ENCODE measurements at regions of chr6 and their contacts with region 1.

Region 1: DNA sequence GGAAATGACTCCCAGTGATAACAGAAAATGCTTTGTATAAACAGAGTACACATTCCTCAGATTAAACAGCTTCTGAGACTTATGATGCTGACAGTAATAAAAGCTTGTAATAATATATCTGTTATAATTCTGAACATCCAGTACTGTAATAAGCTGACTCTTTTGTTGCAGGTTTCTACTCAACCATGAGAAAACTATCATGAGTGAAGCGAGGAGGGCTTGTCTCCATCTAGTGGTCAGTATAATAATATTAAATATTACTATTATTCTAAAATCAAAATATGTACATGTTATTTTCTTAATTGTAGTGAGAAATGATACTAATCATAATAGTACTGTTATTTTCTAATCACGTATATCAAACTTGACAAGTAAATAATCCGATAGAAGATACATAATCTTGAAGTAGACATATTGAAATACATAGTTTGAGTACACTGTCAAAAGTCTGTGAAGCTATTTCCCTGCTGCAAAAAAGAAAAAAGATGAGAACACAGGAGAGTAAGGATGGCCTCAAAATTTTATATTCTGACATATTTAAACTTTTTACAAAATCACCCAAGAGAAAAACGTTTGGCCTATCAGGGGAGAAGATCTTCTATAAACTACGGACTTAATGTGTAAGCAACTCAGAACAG is 183.1 kb downstream of the MOXD1 start:
- DNase-seq: no peak
- ATAC-seq: no peak
- H3K4me3 ChIP-seq: no peak overlapping the region
- H3K27ac ChIP-seq: no peak overlapping the region
- H3K4me1 ChIP-seq: no peaks in the 10 kb centered on the region
- H3K27me3 ChIP-seq: no peaks in the 10 kb centered on the region
- CTCF ChIP-seq: peak; percentile 52

Region 2: DNA sequence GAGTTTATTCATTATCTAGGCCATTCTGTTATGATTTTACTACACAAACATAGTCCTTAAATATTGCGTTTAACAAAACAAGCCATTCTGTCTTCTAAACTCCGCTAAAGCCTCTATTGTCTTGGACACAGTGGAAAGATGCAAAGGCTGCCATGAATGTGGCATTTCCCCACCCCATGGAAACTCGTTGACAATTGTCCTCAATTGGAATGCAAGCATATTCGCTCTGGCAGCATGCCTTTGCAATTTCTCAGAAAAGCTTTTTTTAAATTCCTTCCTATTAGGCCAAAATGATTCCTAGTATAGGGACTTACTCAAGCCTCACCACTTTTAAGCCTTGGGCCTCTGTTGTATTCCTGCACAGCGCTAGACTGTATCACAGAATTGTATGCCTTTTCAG is 539.7 kb before region 1 on chr6:
- intact Hi-C with region 1: no loop called
- DNase-seq: no peak
- ATAC-seq: no peak
- H3K4me3 ChIP-seq: no peak overlapping the region
- H3K27ac ChIP-seq: no peak overlapping the region
- H3K4me1 ChIP-seq: no peaks in the 10 kb centered on the region
- H3K27me3 ChIP-seq: no peaks in the 10 kb centered on the region
- CTCF ChIP-seq: no peak

Region 3: GRCh38 chr6:131923356-131923755 is 294.8 kb before region 1 on chr6:
- intact Hi-C with region 1: loop called (anchors 5 to 10 kb)
- DNase-seq: peak in 1 of 2 donors; percentile 27
- ATAC-seq: no peak
- H3K4me3 ChIP-seq: no peak overlapping the region
- H3K27ac ChIP-seq: no peak overlapping the region
- H3K4me1 ChIP-seq: no peaks in the 10 kb centered on the region
- H3K27me3 ChIP-seq: no peaks in the 10 kb centered on the region
- CTCF ChIP-seq: peak; percentile 40

Region 4: DNA sequence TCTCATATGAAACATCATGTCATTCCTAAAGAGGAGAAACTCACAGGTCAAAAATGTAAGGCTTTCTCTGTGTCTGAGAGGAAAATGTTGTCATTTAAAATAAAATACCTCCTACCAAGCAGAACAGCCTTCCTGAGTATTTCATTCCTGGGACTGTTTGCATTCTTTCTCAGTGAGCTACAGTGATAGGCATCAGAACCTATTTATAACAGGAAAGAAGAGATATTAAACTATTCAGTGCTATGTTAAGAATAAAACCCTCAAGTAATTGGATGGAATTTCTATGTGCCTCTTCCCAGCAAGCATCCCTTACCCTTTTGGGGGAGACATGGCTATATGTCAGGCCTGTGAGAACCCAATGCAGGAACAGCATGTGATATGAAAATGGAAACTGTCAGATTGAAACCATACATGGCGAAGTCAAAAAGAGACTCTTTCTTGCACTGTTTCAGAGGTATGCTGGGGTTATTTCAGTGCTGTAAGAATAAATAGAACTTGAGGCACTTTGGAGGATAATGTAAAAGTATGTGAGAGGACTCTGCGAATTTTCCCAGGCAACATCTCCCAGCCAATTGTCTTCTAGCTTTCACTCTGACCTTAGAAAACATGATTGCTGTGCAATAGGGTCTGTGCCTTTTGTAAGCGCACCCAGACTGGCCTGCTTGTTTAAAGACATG is 133.2 kb before region 1 on chr6:
- intact Hi-C with region 1: loop called in 1 of 2 experiments (anchors 10 kb)
- DNase-seq: no peak
- ATAC-seq: no peak
- H3K4me3 ChIP-seq: no peak overlapping the region
- H3K27ac ChIP-seq: peak overlapping the region; percentile 32
- H3K4me1 ChIP-seq: no peaks in the 10 kb centered on the region
- H3K27me3 ChIP-seq: no peaks in the 10 kb centered on the region
- CTCF ChIP-seq: no peak